ENCODE measurements at regions of chr22 and their contacts with region 1.

Region 1: GRCh38 chr22:29979777-29980321 is 96.9 kb downstream of the MTMR3 start:
- DNase-seq: no peak
- ATAC-seq: no peak

Region 2: GRCh38 chr22:29912605-29913398 is 67.0 kb before region 1 on chr22:
- intact Hi-C with region 1: loop called (anchors 10 kb)
- DNase-seq: no peak
- ATAC-seq: peak; percentile 55

Region 3: DNA sequence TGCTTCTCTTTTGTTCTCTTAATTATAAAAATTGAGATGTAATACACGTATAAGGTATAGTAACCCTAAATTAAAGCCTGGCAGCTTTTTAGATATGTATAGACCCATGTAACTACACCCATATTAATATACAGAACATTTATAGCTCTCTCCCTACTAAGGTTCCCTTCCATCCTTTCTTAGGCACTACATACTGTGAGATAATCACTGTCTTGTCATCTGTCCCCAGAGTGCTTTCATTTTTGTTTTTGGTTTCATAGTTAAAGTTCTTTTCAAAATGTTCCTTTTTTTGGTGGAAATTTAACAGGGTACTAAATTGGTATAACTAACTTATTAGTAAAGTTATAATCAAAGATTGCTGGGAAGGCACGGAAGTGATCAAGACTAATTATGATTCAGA is 47.7 kb before region 1 on chr22:
- intact Hi-C with region 1: no loop called
- DNase-seq: no peak
- ATAC-seq: no peak

Region 4: GRCh38 chr22:30104501-30105156 is 124.8 kb after region 1 on chr22:
- intact Hi-C with region 1: no loop called
- DNase-seq: no peak
- ATAC-seq: no peak